ENCODE measurements at regions of chr10 and their contacts with region 1.

Region 1: DNA sequence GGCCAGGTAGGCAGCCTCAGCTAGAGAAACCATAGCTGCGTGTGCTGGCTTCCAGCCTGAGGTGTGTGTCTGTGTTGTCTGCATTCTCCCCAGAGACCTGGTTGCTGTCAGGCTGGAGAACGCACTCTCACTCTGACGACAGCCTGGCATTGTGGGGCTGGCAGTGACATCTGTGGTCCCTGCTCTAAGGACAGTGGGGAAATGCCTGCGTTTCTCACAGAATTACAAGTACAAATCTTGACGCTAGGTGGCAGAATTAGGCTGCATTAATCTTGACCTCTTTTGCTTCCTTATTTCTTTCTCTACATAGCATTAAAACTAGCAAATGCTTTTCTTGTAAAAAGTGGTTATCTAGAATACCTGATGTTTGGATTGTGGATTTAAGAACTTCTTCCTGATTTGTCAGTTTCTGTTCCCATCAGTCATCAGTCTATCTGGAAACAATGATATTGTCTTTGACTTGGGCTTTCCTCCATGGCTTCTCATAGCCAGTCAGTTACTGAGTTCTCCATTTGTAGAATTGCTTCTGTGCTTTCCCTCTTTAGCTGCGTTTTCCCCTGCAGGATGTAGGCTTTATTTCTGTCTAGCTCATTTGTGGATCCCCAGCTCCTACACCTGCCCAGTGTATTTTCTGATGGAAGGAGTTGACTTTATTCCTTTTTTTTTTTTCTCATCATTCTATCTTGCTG is 86.0 kb downstream of the FANK1 start:
- DNase-seq: no peak
- ATAC-seq: peak; percentile 57
- H3K4me3 Mint-ChIP-seq: no peak overlapping the region
- H3K27ac Mint-ChIP-seq: no peak overlapping the region
- H3K4me1 Mint-ChIP-seq: no peaks in the 10 kb centered on the region
- H3K27me3 Mint-ChIP-seq: peaks cover 14% of the 10 kb centered on the region

Region 2: GRCh38 chr10:126387023-126387921 is 404.9 kb after region 1 on chr10:
- CTCF ChIA-PET with region 1: interaction called, 4 read pairs
- POLR2A ChIA-PET with region 1: no interaction called
- intact Hi-C with region 1: loop called (anchors 1 to 5 kb)
- DNase-seq: peak; percentile 70
- ATAC-seq: no peak
- H3K4me3 Mint-ChIP-seq: peak overlapping the region; percentile 64
- H3K27ac Mint-ChIP-seq: no peak overlapping the region
- H3K4me1 Mint-ChIP-seq: peaks cover 6% of the 10 kb centered on the region
- H3K27me3 Mint-ChIP-seq: peaks cover 33% of the 10 kb centered on the region

Region 3: GRCh38 chr10:126504063-126504739 is 521.8 kb after region 1 on chr10:
- CTCF ChIA-PET with region 1: interaction called, 3 read pairs
- POLR2A ChIA-PET with region 1: no interaction called
- intact Hi-C with region 1: loop called (anchors 1 kb)
- DNase-seq: peak; percentile 11
- ATAC-seq: no peak
- H3K4me3 Mint-ChIP-seq: no peak overlapping the region
- H3K27ac Mint-ChIP-seq: no peak overlapping the region
- H3K4me1 Mint-ChIP-seq: no peaks in the 10 kb centered on the region
- H3K27me3 Mint-ChIP-seq: no peaks in the 10 kb centered on the region

Region 4: DNA sequence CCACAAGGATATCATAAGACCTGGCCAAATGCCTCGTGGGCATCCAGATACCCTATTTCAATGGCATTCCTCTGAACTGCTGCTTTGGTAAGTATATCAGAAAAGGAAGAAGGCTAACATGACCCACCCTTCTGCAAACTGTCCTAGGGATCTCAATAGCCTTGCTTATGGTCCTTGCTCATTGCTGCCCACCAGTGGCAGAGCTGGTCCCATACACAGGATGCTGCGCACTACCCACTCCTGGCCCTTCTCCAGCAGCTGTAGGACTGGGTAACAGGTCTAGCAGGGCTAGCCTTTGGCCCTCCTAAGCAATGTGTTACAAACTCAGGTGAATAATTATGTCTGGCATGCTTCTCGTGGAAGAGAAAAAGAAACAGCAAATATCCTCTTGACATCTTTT is 615.6 kb after region 1 on chr10:
- CTCF ChIA-PET with region 1: no interaction called
- POLR2A ChIA-PET with region 1: no interaction called
- intact Hi-C with region 1: loop called (anchors 2 to 5 kb)
- DNase-seq: peak; percentile 35
- ATAC-seq: peak; percentile 44
- H3K4me3 Mint-ChIP-seq: no peak overlapping the region
- H3K27ac Mint-ChIP-seq: no peak overlapping the region
- H3K4me1 Mint-ChIP-seq: no peaks in the 10 kb centered on the region
- H3K27me3 Mint-ChIP-seq: peaks cover 2% of the 10 kb centered on the region

Region 5: GRCh38 chr10:126749015-126749655 is 766.7 kb after region 1 on chr10:
- CTCF ChIA-PET with region 1: no interaction called
- POLR2A ChIA-PET with region 1: no interaction called
- intact Hi-C with region 1: loop called in 1 of 2 experiments (anchors 1 kb)
- DNase-seq: peak; percentile 79
- ATAC-seq: peak; percentile 80
- H3K4me3 Mint-ChIP-seq: no peak overlapping the region
- H3K27ac Mint-ChIP-seq: no peak overlapping the region
- H3K4me1 Mint-ChIP-seq: no peaks in the 10 kb centered on the region
- H3K27me3 Mint-ChIP-seq: no peaks in the 10 kb centered on the region

Measured in activated CD4-positive, alpha-beta T cell treated with anti-CD3 and anti-CD28 coated beads for 36 hours (primary cell).